PC-9 (cell line): ENCODE measurements at regions of chr4 and their contacts with region 1.

Region 1: DNA sequence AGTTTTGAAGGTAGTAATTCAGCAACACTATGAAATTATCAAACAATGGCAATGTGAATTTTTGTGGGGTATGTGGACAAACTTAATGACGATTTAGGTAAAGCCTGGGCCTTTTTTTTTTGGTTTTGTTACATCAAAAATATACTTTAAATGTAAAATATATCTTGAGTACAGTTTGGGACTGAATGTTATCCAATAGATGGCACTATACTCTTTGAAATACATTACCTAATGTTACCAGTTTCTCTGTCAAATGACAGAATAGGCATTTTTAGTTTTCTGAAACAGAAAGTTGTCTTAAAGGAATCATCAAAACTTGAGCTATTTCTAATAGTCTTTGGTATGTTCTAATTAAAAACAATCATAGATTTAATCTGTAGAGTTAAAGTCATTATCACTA is 1651.9 kb downstream of the C4orf33 start:
- DNase-seq: no peak
- H3K4me3 ChIP-seq: no peak overlapping the region
- H3K27ac ChIP-seq: no peak overlapping the region
- H3K4me1 ChIP-seq: no peaks in the 10 kb centered on the region
- H3K27me3 ChIP-seq: no peaks in the 10 kb centered on the region
- CTCF ChIP-seq: peak; percentile 50

Region 2: DNA sequence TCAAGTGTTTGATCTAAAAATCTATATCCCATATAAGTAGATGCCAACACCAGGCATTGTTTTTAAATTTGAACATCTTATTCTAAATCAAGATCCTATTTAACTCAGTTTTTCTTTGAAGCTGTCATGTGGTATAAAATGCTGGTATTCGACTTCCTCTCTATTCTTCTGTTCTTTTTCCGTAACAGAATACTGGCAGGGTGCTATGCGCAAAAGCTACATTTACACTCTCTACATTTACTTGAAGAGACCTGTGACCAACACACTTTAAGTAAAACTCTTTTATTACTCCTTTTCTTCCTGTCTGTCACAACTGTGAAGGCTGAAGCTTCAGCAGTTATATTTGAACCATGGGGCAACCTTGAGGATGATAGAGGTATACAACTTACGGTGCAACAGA is 1039.1 kb before region 1 on chr4:
- CTCF ChIA-PET with region 1: interaction called, 11 read pairs
- POLR2A ChIA-PET with region 1: no interaction called
- intact Hi-C with region 1: no loop called
- DNase-seq: no peak
- H3K4me3 ChIP-seq: no peak overlapping the region
- H3K27ac ChIP-seq: no peak overlapping the region
- H3K4me1 ChIP-seq: no peaks in the 10 kb centered on the region
- H3K27me3 ChIP-seq: no peaks in the 10 kb centered on the region
- CTCF ChIP-seq: no peak